Spleen (tissue), 13 donors: ENCODE measurements at regions of chr19 and their contacts with region 1.

Region 1: GRCh38 chr19:5078182-5078581 is 109.3 kb downstream of the KDM4B start:
- DNase-seq: no peak
- H3K4me3 ChIP-seq: no peak overlapping the region
- H3K27ac ChIP-seq: peak overlapping the region in 7 of 8 donors; percentile 36 to 71 (median 66)
- H3K4me1 ChIP-seq: peaks cover 13 to 47% (median 31%) of the 10 kb centered on the region in 6 donors
- H3K27me3 ChIP-seq: no peaks in the 10 kb centered on the region
- CTCF ChIP-seq: no peak
- POLR2A ChIP-seq: no peak

Region 2: DNA sequence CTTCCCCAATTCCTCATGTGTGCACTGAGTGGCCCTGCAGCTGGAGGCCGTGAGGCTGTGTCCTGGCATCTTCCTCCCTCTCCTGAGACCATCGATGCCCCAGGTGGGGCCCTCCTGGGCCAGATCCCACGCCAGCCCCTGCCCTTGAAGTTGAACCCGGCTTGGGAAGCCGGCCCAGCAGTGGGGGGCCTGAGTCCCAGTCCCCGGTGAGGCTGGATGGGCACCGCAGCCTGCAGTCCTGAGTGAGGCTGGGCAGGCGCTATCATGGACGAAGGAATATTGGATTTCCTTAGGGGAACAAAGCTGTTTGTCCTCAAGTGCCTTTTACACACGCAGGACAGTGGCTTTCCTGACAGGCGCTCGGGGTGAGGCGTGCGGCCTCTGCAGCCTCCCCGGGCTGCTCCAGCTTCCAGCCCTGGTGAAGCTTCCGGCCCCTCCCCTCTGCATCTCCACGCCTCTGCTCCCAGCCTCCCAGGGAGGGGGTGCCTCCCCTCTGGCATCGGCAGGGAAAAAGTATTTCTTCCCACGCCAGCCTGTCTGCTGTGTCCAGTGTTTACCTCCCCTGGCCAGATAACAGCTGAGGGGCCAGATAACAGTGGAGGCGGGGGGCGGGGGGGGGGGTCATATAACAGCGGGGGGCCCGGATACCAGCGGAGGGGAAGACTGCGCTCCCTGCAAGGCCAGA is 50.2 kb after region 1 on chr19:
- intact Hi-C with region 1: loop called (anchors 10 kb)
- DNase-seq: no peak
- H3K4me3 ChIP-seq: peak overlapping the region in 1 of 8 donors; percentile 12
- H3K27ac ChIP-seq: peak overlapping the region; percentile 57 to 95 (median 92)
- H3K4me1 ChIP-seq: peaks cover 38 to 94% (median 72%) of the 10 kb centered on the region in 6 donors
- H3K27me3 ChIP-seq: no peaks in the 10 kb centered on the region
- CTCF ChIP-seq: no peak
- POLR2A ChIP-seq: no peak